ENCODE measurements at regions of chr10 and their contacts with region 1.

Region 1: GRCh38 chr10:103839872-103840746 is 15.3 kb downstream of the SH3PXD2A start:
- DNase-seq: peak in 1 of 2 donors; percentile 52
- ATAC-seq: peak; percentile 53

Region 2: DNA sequence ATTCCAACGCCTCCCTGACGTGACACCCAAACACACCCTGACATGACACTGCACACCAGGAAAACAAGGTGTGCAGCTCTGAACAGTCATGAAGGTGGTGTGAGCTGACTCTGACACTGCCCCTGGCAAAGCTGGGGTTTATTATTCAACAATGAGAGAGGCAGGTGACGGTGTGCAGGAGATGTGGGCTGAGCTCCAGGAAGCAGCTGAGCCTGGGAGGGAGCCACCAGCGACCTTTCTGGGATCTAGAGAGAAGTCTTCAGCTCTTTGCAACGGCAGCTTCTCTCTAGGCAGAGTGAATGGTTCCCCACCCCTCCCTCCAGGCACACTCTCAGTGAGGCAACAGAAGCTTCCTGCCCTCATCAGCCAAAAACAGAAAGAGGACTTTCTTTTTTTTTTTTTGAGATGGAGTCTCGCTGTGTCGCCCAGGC is 50.3 kb before region 1 on chr10:
- intact Hi-C with region 1: loop called in 1 of 2 experiments (anchors 5 kb)
- DNase-seq: peak; percentile 73 to 91
- ATAC-seq: peak; percentile 64

Region 3: GRCh38 chr10:103933557-103934121 is 93.5 kb after region 1 on chr10:
- intact Hi-C with region 1: no loop called
- DNase-seq: no peak
- ATAC-seq: no peak